Vagina (tissue), 2 donors: ENCODE measurements at regions of chr22 and their contacts with region 1.

Region 1: DNA sequence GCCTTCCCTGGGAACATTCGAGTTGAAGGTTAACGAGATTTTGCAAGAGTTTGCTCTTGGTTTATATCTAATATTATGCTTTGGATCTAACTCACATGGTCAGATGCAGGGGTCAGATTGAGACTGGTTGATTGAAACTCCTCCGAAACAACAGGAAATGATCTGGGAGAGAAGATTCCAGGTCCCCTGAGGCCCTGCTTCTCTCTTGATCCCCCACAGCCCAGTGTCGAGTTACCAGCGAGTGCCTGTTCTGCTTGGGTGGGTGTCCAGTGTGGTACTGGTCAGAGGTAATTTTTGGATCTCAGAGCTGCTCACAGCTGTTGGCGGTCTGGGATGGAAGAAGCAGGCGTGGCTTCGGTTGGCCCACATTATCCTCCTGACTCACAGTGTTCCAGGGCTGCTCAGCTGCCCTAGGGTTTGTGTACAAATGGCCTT is 9.2 kb downstream of the FBLN1 start:
- DNase-seq: peak in 1 of 2 donors; percentile 96
- H3K4me3 ChIP-seq: no peak overlapping the region
- H3K27ac ChIP-seq: peak overlapping the region; percentile 92
- H3K4me1 ChIP-seq: peaks cover 86% of the 10 kb centered on the region
- H3K27me3 ChIP-seq: no peaks in the 10 kb centered on the region
- CTCF ChIP-seq: no peak
- POLR2A ChIP-seq: no peak

Region 2: GRCh38 chr22:45441138-45441537 is 70.7 kb before region 1 on chr22:
- intact Hi-C with region 1: loop called (anchors 5 kb)
- DNase-seq: no peak
- H3K4me3 ChIP-seq: no peak overlapping the region
- H3K27ac ChIP-seq: peak overlapping the region; percentile 61
- H3K4me1 ChIP-seq: peaks cover 21% of the 10 kb centered on the region
- H3K27me3 ChIP-seq: no peaks in the 10 kb centered on the region
- CTCF ChIP-seq: peak in 2 of 3 experiments; percentile 32 to 70
- POLR2A ChIP-seq: no peak